Lower leg skin (tissue), 4 donors: ENCODE measurements at regions of chr4 and their contacts with region 1.

Region 1: GRCh38 chr4:112099701-112100297 is 45.5 kb upstream of the FAM241A start:
- DNase-seq: no peak
- H3K4me3 ChIP-seq: no peak overlapping the region
- CTCF ChIP-seq: no peak
- POLR2A ChIP-seq: no peak

Region 2: DNA sequence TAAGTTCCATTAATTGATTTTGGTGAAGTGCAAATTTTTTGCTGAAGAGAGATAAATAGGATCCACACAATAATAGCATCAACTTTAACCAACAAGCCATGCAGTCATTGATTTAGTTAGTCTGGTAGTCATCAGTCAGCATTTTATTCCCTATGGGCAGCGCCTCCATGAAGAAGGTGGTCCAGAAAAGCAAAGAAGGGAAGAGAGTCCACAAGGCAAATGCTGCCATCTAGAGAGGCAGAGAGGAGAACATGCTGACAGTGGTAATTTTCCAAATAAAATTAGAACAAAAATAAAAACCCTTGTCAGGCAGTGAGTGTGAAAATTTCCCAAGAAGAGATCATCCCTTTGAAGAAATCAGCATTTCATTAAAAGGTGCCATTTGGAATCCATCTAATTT is 321.3 kb before region 1 on chr4:
- intact Hi-C with region 1: no loop called
- DNase-seq: no peak
- H3K4me3 ChIP-seq: no peak overlapping the region
- CTCF ChIP-seq: no peak
- POLR2A ChIP-seq: no peak

Region 3: DNA sequence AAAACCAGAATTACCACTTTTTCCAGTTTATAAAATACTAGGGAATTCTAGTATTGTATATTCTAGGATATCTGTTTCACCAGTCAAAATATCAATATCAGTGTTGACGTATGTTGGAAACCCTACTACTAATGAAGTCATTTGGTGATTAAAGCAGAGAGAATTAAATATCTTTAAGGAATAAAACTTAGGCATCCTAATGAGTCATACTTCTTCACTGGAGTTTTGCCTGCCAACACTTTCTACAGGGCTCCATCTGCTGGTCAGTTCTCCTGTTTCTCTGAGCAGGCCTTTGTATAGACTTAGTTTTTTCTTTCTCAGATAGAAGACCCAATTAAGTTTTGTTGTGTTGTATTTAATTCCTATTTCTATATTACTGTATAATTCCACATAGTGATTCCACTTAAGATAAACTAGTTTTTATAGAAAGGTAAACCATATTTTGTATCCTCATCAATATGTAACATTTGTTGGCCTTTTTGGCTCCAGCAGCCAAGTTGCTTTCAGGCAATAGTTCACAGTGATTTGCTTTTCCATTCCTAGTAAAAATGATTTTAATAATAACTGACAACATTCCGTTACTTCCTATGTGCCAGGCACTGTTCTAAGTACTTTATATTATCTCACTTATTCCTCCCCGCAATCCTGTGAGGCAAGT is 135.3 kb after region 1 on chr4:
- intact Hi-C with region 1: loop called (anchors 5 kb)
- DNase-seq: peak in 1 of 2 donors; percentile 75
- H3K4me3 ChIP-seq: no peak overlapping the region
- CTCF ChIP-seq: peak in 1 of 3 donors; percentile 13
- POLR2A ChIP-seq: no peak